Panc1 (cell line): ENCODE measurements at regions of chr6 and their contacts with region 1.

Region 1: DNA sequence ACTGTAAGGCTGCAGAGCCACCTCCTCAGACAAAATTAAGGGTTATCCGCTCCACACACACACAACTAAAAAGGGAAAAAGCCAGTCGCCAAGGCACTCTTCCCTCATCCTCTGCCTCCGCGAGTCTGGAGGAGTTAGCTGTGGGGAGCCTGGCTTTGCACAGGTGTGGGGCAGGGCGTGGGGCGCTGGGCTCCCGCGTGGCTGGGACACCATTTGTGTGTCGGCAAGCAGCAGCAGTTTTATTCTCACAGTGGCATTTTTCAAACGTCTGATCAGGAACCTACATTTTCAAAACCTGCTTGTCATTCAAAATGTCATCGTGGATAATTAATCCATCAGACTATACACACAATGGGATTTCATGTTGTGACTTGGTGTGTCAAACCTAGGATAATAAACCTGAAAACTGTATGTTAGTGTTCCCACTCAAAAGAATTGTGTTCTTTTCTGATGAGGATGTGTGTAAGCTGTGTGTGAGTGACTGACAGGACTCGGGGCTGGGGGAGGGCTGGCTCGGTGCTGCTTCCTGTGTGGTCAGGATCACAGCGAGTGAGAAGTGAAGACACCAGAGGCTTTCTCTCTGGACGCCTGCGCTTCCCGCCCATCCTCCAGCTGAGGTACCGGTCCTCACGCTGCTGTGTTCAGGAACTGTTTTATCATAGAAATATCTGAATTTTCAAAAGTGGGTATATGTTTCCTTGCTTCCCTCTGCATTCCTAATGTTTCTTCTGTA is 83.1 kb downstream of the IRF4 start:
- DNase-seq: no peak
- ATAC-seq: no peak; the same call in 1 of the 2 replicates
- H3K4me3 ChIP-seq: no peak overlapping the region
- H3K27ac ChIP-seq: no peak overlapping the region
- H3K4me1 ChIP-seq: no peaks in the 10 kb centered on the region
- H3K27me3 ChIP-seq: no peaks in the 10 kb centered on the region
- CTCF ChIP-seq: no peak

Region 2: DNA sequence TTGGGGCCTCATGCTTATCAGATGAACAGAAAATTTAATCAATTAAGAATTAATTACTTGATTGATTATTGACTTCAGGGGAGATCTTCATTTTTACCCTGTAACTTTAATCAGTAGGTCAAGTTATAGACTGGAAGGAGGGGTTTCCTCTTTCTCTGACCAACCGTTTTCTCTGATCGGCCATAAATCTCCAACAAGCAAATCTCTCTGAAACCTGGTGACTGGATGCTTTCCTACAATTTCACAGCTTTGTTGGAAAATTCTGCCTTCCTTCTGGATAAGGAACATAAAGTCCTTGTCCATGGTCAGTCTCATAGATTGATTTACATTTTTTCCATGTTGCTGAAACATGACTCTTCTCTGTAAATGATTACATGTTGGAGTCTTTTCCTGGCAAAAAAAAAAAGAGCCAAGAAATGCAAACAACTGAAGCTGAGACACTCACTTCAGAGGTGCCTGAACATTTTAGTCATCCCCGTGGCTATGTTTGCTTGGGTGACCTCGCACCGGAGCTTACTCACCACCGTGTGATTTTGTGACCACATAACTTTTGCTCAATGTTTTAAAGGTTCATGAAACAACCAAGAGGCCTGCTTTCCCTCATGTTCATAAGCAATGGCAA is 52.1 kb before region 1 on chr6:
- CTCF ChIA-PET with region 1: no interaction called
- POLR2A ChIA-PET with region 1: interaction called, 10 read pairs
- in situ Hi-C with region 1: no loop called
- intact Hi-C with region 1: no loop called
- DNase-seq: peak; percentile 92
- ATAC-seq: peak; percentile 95
- H3K4me3 ChIP-seq: no peak overlapping the region
- H3K27ac ChIP-seq: no peak overlapping the region
- H3K4me1 ChIP-seq: peaks cover 3% of the 10 kb centered on the region; the same call in 1 of the 2 replicates
- H3K27me3 ChIP-seq: no peaks in the 10 kb centered on the region
- CTCF ChIP-seq: no peak

Region 3: GRCh38 chr6:524803-525202 is 50.2 kb after region 1 on chr6:
- CTCF ChIA-PET with region 1: interaction called, 10 read pairs
- POLR2A ChIA-PET with region 1: no interaction called
- in situ Hi-C with region 1: no loop called
- intact Hi-C with region 1: no loop called
- DNase-seq: no peak
- ATAC-seq: no peak
- H3K4me3 ChIP-seq: no peak overlapping the region
- H3K27ac ChIP-seq: no peak overlapping the region
- H3K4me1 ChIP-seq: no peaks in the 10 kb centered on the region
- H3K27me3 ChIP-seq: no peaks in the 10 kb centered on the region
- CTCF ChIP-seq: no peak